ENCODE measurements at regions of chr7 and their contacts with region 1.

Region 1: GRCh38 chr7:53596230-53596629 is 560.8 kb downstream of the POM121L12 start:
- DNase-seq: peak; percentile 52
- H3K4me3 ChIP-seq: no peak overlapping the region
- H3K27ac ChIP-seq: no peak overlapping the region
- H3K4me1 ChIP-seq: peaks cover 8% of the 10 kb centered on the region
- H3K27me3 ChIP-seq: no peaks in the 10 kb centered on the region
- CTCF ChIP-seq: peak in 1 of 2 donors; percentile 18
- POLR2A ChIP-seq: no peak

Region 2: DNA sequence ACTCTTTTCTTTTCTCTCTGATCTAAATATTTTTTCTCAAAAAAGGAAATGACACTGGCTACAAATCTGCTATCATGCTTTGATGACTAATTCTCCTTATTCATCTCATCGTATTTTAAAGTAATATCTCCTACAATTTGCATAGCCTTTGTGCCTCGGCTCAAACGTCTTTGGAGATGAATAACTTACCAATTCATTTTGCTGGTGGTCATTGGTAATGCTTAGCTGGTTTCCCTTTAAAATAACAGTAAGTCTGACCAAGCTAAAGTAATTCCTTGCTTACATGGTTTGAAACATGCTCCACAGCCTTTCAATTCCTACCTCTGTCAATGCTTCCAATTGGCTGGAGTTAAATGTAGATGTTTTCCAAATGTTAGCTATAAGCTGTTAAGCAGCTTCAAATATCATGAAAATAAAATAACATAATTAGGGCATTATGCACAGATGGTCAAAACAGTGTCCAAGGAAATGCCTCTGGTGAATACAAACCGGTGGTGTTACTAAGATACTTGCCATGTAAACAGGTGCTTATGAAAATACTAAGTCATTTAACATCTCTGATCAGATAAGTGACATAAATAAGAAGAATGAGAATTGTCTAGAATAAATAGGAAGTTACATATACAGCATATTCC is 125.8 kb before region 1 on chr7:
- CTCF ChIA-PET with region 1: no interaction called
- POLR2A ChIA-PET with region 1: no interaction called
- dilution Hi-C with region 1: no loop called
- intact Hi-C with region 1: no loop called
- DNase-seq: no peak
- H3K4me3 ChIP-seq: no peak overlapping the region
- H3K27ac ChIP-seq: no peak overlapping the region
- H3K4me1 ChIP-seq: no peaks in the 10 kb centered on the region
- H3K27me3 ChIP-seq: no peaks in the 10 kb centered on the region
- CTCF ChIP-seq: no peak
- POLR2A ChIP-seq: no peak

Region 3: GRCh38 chr7:53611043-53611442 is 14.8 kb after region 1 on chr7:
- CTCF ChIA-PET with region 1: interaction called, 3 read pairs
- POLR2A ChIA-PET with region 1: no interaction called
- dilution Hi-C with region 1: no loop called
- intact Hi-C with region 1: loop called (anchors 1 kb)
- DNase-seq: peak; percentile 91
- H3K4me3 ChIP-seq: no peak overlapping the region
- H3K27ac ChIP-seq: peak overlapping the region; percentile 46
- H3K4me1 ChIP-seq: peaks cover 12% of the 10 kb centered on the region
- H3K27me3 ChIP-seq: no peaks in the 10 kb centered on the region
- CTCF ChIP-seq: no peak
- POLR2A ChIP-seq: no peak

Region 4: DNA sequence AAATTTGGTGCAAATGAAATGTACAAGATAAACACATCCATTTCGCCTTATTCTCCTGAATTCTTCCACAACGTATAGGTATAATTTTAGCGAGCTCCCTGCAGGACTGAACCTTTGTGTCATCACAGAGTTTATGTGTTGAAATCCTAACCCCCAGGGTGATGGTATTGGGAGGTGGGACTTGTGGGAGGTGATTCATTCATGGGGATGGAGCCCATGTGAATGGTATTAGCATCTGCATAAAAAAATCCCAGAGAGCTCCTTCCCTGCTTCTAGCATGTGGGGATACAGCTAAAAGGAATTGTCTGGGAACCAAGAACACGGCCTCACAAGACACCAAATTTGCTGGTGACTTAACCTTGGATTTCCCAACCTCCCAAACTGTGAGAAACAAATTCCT is 204.5 kb after region 1 on chr7:
- CTCF ChIA-PET with region 1: no interaction called
- POLR2A ChIA-PET with region 1: no interaction called
- dilution Hi-C with region 1: no loop called
- intact Hi-C with region 1: no loop called
- DNase-seq: no peak
- H3K4me3 ChIP-seq: no peak overlapping the region
- H3K27ac ChIP-seq: no peak overlapping the region
- H3K4me1 ChIP-seq: no peaks in the 10 kb centered on the region
- H3K27me3 ChIP-seq: no peaks in the 10 kb centered on the region
- CTCF ChIP-seq: no peak
- POLR2A ChIP-seq: no peak

Measured in endothelial cell of umbilical vein (primary cell).